Breast epithelium (tissue), 4 donors: ENCODE measurements at regions of chr5 and their contacts with region 1.

Region 1: GRCh38 chr5:175275097-175275496 is 168.9 kb downstream of the DRD1 start:
- DNase-seq: no peak
- H3K4me3 ChIP-seq: no peak overlapping the region
- H3K27ac ChIP-seq: no peak overlapping the region
- H3K4me1 ChIP-seq: no peaks in the 10 kb centered on the region
- H3K27me3 ChIP-seq: peaks cover 0 to 7% of the 10 kb centered on the region in 2 donors
- CTCF ChIP-seq: no peak
- POLR2A ChIP-seq: no peak

Region 2: GRCh38 chr5:175309218-175309810 is 34.2 kb after region 1 on chr5:
- intact Hi-C with region 1: loop called (anchors 2 kb)
- DNase-seq: no peak
- H3K4me3 ChIP-seq: no peak overlapping the region
- H3K27ac ChIP-seq: no peak overlapping the region
- H3K4me1 ChIP-seq: no peaks in the 10 kb centered on the region
- H3K27me3 ChIP-seq: peaks cover 0 to 1% of the 10 kb centered on the region in 2 donors
- CTCF ChIP-seq: no peak
- POLR2A ChIP-seq: no peak